ENCODE measurements at regions of chr9 and their contacts with region 1.

Region 1: DNA sequence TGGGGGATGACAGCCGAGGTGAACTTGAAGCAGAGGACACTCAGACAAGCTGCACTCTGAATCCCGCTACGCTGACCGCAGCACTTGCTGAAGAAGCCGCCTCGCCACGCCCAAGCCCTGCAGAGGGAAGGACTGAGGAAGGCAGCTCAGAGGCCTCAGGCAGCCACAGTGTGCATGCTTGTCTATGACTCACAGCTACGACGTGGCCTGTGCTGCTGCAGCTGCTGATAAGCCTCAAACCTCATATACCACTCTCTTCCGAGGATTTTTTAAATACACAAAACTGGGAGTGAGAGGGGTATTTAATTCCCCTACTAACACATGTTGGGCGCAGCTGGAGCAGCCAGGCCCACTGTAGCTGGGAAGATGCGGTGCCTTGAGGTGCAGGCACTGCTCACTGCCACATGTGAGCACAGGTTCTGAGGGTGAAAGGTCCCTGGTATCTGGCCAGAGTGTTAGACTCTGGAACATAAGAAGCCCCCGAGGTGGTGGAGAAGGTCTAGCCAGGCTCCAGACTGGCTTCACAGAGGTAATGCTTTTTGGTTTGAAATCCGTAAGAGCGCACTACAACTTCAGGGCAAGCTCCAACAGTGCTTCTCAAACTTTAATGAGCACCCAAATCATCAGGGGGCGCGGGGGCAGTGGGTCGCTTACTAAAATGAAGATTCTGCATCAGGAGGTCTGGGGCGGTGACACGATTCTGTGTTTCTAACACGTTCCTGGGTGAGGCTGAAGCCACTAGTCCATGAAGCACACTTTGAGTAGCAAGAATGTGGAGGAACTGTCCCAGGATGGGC is 196.8 kb downstream of the AUH start:
- DNase-seq: peak; percentile 89
- ATAC-seq: peak; percentile 84
- H3K4me3 ChIP-seq: no peak overlapping the region
- H3K27ac ChIP-seq: peak overlapping the region; percentile 87
- H3K4me1 ChIP-seq: peaks cover 42% of the 10 kb centered on the region
- H3K27me3 ChIP-seq: no peaks in the 10 kb centered on the region
- CTCF ChIP-seq: no peak

Region 2: DNA sequence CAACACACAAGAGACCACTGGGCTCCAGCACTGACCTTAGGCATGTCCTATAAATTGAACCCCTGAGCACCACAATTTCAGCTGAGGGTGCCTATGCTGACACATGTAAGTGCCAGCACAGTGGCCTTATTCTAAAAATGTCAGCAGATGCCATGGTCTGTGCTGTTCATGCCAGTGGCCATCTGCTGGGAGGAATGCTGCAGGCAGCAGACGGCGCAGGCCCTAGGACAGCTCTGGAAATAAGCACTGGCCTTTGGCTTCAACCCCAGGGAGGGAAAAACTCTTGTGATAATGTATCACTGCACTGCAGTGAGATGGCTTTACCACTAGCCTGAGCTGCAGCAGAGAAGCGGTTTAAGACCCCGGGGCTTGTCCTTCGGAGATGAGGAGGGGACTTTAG is 264.8 kb before region 1 on chr9:
- CTCF ChIA-PET with region 1: no interaction called
- POLR2A ChIA-PET with region 1: no interaction called
- intact Hi-C with region 1: no loop called
- DNase-seq: no peak
- ATAC-seq: no peak
- H3K4me3 ChIP-seq: no peak overlapping the region
- H3K27ac ChIP-seq: no peak overlapping the region
- H3K4me1 ChIP-seq: no peaks in the 10 kb centered on the region
- H3K27me3 ChIP-seq: no peaks in the 10 kb centered on the region
- CTCF ChIP-seq: no peak

Region 3: DNA sequence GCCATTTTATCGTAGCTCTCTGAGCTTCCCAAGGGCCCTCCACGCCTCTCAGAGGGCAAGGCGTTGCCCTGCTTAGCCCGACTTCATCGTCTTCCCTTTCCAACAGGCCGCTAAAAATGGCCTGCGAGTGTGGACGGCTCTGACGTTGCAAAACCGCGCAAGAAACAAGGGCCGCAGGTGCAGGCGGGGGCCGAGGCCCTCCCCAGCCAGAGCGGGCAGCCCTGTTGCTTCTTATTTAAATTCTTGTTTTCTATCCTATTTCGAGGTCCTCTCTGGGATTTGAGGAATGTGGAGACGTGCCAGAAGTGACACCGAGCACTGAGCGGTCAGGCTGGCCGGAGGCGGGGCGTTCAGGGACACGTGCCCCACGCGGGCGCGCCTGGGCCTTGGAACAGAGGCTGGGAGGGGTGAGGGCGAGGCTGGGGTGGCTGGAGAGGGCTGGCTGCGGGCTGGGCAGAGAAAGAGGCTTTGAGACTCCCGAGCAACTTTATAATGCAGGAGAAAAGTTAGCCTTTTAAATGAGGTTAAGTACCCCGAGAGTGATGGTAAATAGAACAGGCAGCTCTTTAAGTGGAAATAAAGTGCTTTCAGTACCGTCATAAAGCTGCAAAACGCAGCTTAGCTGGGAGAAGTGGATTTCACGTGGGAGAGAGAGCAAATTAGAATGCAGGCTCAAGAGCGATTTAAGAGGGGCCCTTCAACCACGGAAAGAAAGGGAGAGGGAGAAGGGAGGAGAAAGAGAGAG is 46.8 kb before region 1 on chr9:
- CTCF ChIA-PET with region 1: no interaction called
- POLR2A ChIA-PET with region 1: no interaction called
- intact Hi-C with region 1: loop called (anchors 5 kb)
- DNase-seq: no peak
- ATAC-seq: no peak
- H3K4me3 ChIP-seq: no peak overlapping the region
- H3K27ac ChIP-seq: no peak overlapping the region
- H3K4me1 ChIP-seq: peaks cover 23% of the 10 kb centered on the region
- H3K27me3 ChIP-seq: no peaks in the 10 kb centered on the region
- CTCF ChIP-seq: no peak

Region 4: DNA sequence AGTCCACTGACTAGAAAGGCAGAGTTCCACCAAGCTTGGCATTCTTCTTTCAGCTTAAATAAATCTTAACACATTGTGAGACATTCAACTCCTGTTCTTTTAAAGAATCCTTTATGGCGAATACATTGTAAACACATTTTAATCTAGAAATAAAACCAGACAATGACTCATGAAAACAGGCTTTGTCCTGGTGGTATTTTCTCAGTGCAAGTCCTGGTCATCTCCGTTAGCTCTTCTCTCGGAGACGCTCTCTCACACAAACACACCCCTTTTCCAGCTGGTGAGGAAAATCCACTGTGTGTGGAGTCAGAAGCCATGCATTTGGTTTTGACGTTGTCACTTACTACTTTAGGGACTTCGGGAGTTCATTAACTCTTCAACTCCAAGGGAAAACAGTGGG is 56.4 kb after region 1 on chr9:
- CTCF ChIA-PET with region 1: no interaction called
- POLR2A ChIA-PET with region 1: no interaction called
- intact Hi-C with region 1: no loop called
- DNase-seq: no peak
- ATAC-seq: no peak; the same call in 1 of the 2 replicates
- H3K4me3 ChIP-seq: no peak overlapping the region
- H3K27ac ChIP-seq: no peak overlapping the region
- H3K4me1 ChIP-seq: no peaks in the 10 kb centered on the region
- H3K27me3 ChIP-seq: no peaks in the 10 kb centered on the region
- CTCF ChIP-seq: no peak

Region 5: DNA sequence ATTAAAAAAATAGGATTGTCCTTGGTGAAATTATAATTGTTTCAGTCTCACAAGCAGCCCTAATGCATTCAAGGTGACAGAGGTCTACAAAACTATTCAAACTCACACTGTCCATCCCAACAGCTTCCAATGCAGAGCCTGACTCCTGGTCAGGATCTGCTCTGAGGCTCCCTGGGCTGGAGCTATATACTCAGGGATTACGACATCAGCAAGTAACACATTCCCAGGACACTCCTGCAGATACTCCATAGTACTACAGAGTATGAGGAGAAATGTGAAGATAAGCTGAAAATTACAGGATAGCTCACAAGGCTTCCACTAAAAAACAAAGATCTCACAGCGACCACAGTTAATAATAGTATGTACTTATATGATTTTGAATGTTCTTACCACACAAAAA is 66.7 kb after region 1 on chr9:
- CTCF ChIA-PET with region 1: no interaction called
- POLR2A ChIA-PET with region 1: no interaction called
- intact Hi-C with region 1: no loop called
- DNase-seq: no peak
- ATAC-seq: no peak
- H3K4me3 ChIP-seq: no peak overlapping the region
- H3K27ac ChIP-seq: no peak overlapping the region
- H3K4me1 ChIP-seq: no peaks in the 10 kb centered on the region
- H3K27me3 ChIP-seq: no peaks in the 10 kb centered on the region
- CTCF ChIP-seq: no peak

Region 6: DNA sequence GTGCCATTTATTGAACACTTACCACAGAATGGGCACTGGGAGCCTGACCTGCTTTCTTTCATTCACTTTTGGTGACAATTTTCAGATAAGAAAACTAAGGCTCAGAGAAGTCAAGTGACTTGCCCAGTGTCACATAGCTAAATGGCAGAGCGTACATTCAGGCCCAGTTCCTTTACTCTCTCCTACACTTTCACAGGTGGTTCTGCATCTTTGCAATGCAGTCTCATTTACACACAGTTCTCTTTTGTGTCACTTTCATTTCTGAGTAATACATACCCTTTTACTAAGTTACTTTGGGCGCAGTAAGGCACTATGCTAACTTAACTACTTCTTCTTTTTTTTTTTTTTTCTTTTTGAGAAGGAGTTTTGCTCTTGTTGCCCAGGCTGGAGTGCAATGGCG is 250.4 kb after region 1 on chr9:
- CTCF ChIA-PET with region 1: interaction called, 11 read pairs
- POLR2A ChIA-PET with region 1: no interaction called
- intact Hi-C with region 1: no loop called
- DNase-seq: no peak
- ATAC-seq: no peak
- H3K4me3 ChIP-seq: no peak overlapping the region
- H3K27ac ChIP-seq: no peak overlapping the region
- H3K4me1 ChIP-seq: peaks cover 55% of the 10 kb centered on the region
- H3K27me3 ChIP-seq: no peaks in the 10 kb centered on the region
- CTCF ChIP-seq: no peak